B cell (primary cell): ENCODE measurements at regions of chr6 and their contacts with region 1.

Region 1: DNA sequence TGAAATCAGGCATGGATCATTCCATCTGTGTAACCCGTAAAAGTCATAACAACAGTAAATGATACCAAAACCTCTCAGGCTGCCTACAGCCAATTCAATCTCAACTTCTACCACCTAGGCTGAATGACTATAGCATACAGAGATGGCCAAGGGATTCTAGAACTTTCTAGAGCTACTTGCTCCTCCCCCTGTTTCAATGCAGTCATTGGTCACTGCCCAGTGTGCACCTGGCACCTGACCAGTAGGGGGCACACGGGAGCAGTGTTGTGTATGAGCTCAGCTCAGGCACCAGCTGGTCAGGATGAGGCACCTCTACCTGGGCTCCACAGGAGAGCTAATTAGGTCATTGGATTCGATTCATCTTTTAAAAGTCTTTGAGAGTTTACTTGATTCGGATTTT is 86.2 kb downstream of the PLEKHG1 start:
- DNase-seq: peak; percentile 73
- ATAC-seq: peak; percentile 44
- H3K4me3 ChIP-seq: no peak overlapping the region
- H3K4me3 Mint-ChIP-seq: no peak overlapping the region
- H3K27ac ChIP-seq: peak overlapping the region; percentile 72 to 96
- H3K27ac Mint-ChIP-seq: peak overlapping the region; percentile 46
- H3K4me1 ChIP-seq: peaks cover 89 to 98% of the 10 kb centered on the region in 2 donors
- H3K4me1 Mint-ChIP-seq: peaks cover 93% of the 10 kb centered on the region
- H3K27me3 ChIP-seq: no peaks in the 10 kb centered on the region
- H3K27me3 Mint-ChIP-seq: no peaks in the 10 kb centered on the region
- CTCF ChIP-seq: peak; percentile 75

Region 2: DNA sequence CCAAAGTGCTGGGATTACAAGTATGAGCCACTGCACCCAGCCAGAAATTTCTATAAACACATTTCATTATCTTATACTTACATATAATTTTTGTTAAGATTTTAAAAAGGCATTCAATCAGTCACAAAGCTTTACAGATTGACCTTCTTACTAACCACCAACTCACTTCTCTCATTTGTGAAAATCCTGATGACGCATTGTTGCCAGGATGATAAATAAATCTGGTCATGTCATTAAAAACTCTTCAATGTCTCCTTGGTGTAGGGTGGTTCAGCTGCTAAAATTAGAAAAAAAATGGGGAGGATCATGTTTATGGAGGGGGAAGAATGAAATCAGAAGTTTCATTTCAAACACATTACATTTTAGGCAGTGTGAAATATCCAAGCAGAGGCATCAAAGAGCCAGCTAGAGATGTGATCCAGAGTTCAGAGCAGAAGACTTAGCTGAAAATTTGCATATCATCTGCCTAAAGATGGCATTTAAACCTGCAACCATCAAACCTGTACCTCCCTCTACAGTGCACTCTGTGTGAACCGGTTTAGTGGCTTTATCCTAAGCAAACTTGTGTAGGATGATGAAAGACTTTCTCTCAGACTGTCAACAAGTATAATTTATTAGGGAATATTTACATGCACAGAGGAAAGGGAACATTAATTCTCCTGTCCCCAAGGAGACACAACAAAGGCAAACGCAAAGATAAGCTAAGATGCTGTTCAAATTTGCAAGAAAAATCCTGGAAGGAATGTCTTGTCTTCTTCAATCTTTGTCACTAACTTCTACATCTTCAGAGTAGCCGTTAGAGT is 171.1 kb before region 1 on chr6:
- CTCF ChIA-PET with region 1: no interaction called
- POLR2A ChIA-PET with region 1: no interaction called
- intact Hi-C with region 1: no loop called
- DNase-seq: no peak
- ATAC-seq: no peak
- H3K4me3 ChIP-seq: no peak overlapping the region
- H3K4me3 Mint-ChIP-seq: no peak overlapping the region
- H3K27ac ChIP-seq: no peak overlapping the region
- H3K27ac Mint-ChIP-seq: no peak overlapping the region
- H3K4me1 ChIP-seq: no peaks in the 10 kb centered on the region
- H3K4me1 Mint-ChIP-seq: no peaks in the 10 kb centered on the region
- H3K27me3 ChIP-seq: peaks cover 0 to 4% (median 2%) of the 10 kb centered on the region in 4 experiments
- H3K27me3 Mint-ChIP-seq: peaks cover 4% of the 10 kb centered on the region
- CTCF ChIP-seq: no peak

Region 3: GRCh38 chr6:150641398-150642139 is 44.3 kb before region 1 on chr6:
- CTCF ChIA-PET with region 1: interaction called, 5 read pairs
- POLR2A ChIA-PET with region 1: interaction called, 4 read pairs
- intact Hi-C with region 1: loop called (anchors 2 kb)
- DNase-seq: peak; percentile 86
- ATAC-seq: peak; percentile 68
- H3K4me3 ChIP-seq: peak overlapping the region; percentile 11 to 58 (median 41)
- H3K4me3 Mint-ChIP-seq: peak overlapping the region; percentile 90
- H3K27ac ChIP-seq: peak overlapping the region; percentile 72 to 90
- H3K27ac Mint-ChIP-seq: peak overlapping the region; percentile 90
- H3K4me1 ChIP-seq: peaks cover 54 to 80% of the 10 kb centered on the region in 2 donors
- H3K4me1 Mint-ChIP-seq: peaks cover 86% of the 10 kb centered on the region
- H3K27me3 ChIP-seq: no peaks in the 10 kb centered on the region
- H3K27me3 Mint-ChIP-seq: no peaks in the 10 kb centered on the region
- CTCF ChIP-seq: no peak

Region 4: GRCh38 chr6:150697515-150697914 is 11.7 kb after region 1 on chr6:
- CTCF ChIA-PET with region 1: interaction called, 18 read pairs
- POLR2A ChIA-PET with region 1: no interaction called
- intact Hi-C with region 1: loop called (anchors 2 kb)
- DNase-seq: no peak
- ATAC-seq: no peak
- H3K4me3 ChIP-seq: peak overlapping the region in 2 of 5 experiments; percentile 16 to 22
- H3K4me3 Mint-ChIP-seq: peak overlapping the region; percentile 41
- H3K27ac ChIP-seq: peak overlapping the region; percentile 63 to 96
- H3K27ac Mint-ChIP-seq: peak overlapping the region; percentile 50
- H3K4me1 ChIP-seq: peaks cover 91 to 95% of the 10 kb centered on the region in 2 donors
- H3K4me1 Mint-ChIP-seq: peaks cover 85% of the 10 kb centered on the region
- H3K27me3 ChIP-seq: no peaks in the 10 kb centered on the region
- H3K27me3 Mint-ChIP-seq: no peaks in the 10 kb centered on the region
- CTCF ChIP-seq: no peak

Region 5: DNA sequence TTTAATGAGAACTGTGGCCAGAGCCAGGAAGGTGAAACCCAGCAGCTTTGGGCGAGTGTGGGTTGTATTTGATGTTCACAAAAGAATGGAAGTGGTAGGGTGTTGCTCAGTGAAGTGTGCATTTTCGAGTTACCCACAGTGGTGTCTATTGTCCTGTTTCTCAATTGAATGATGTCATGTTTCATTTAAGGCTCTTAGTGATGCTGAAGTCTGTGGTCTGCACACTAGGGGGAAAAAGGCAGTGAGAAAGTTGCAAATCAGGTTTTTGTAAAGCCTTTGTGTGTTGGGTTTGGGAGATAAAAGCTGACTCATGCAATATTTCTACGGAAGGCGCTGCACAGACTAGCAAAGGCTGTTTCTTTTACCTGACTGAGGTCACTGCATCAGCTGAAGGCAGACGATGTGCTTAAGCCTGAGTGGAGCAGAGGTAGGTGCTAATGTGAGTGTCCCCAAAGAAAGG is 34.9 kb after region 1 on chr6:
- CTCF ChIA-PET with region 1: interaction called, 6 read pairs
- POLR2A ChIA-PET with region 1: interaction called, 3 read pairs
- intact Hi-C with region 1: loop called (anchors 2 kb)
- DNase-seq: peak; percentile 77
- ATAC-seq: peak; percentile 93
- H3K4me3 ChIP-seq: no peak overlapping the region
- H3K4me3 Mint-ChIP-seq: peak overlapping the region; percentile 40
- H3K27ac ChIP-seq: peak overlapping the region in 1 of 2 donors; percentile 56
- H3K27ac Mint-ChIP-seq: peak overlapping the region; percentile 54
- H3K4me1 ChIP-seq: peaks cover 43 to 53% of the 10 kb centered on the region in 2 donors
- H3K4me1 Mint-ChIP-seq: peaks cover 75% of the 10 kb centered on the region
- H3K27me3 ChIP-seq: no peaks in the 10 kb centered on the region
- H3K27me3 Mint-ChIP-seq: no peaks in the 10 kb centered on the region
- CTCF ChIP-seq: peak; percentile 52

Region 6: DNA sequence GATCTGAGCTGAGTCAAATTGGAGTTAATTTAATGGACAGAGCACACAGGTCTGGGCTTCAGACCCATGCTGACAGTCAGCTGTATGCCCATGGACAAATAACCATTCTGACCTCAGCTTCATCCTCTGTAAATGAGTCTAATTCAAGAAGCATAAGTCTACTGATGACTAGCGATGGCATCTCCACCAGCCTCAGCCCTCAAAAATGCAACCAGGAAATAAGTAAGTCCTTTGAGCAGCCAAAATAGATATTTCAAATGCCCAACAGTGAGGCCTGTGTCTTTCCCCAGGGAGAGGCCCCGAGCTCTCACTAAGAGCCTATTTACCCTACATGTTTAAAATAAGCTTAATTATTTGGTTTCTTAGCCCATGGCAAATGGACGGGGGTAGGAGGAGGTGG is 65.4 kb after region 1 on chr6:
- CTCF ChIA-PET with region 1: no interaction called
- POLR2A ChIA-PET with region 1: no interaction called
- intact Hi-C with region 1: no loop called
- DNase-seq: no peak
- ATAC-seq: no peak
- H3K4me3 ChIP-seq: no peak overlapping the region
- H3K4me3 Mint-ChIP-seq: no peak overlapping the region
- H3K27ac ChIP-seq: no peak overlapping the region
- H3K27ac Mint-ChIP-seq: no peak overlapping the region
- H3K4me1 ChIP-seq: no peaks in the 10 kb centered on the region
- H3K4me1 Mint-ChIP-seq: peaks cover 20% of the 10 kb centered on the region
- H3K27me3 ChIP-seq: no peaks in the 10 kb centered on the region
- H3K27me3 Mint-ChIP-seq: no peaks in the 10 kb centered on the region
- CTCF ChIP-seq: no peak

Region 7: GRCh38 chr6:150767571-150768018 is 81.7 kb after region 1 on chr6:
- CTCF ChIA-PET with region 1: no interaction called
- POLR2A ChIA-PET with region 1: no interaction called
- intact Hi-C with region 1: no loop called
- DNase-seq: peak; percentile 20
- ATAC-seq: no peak
- H3K4me3 ChIP-seq: no peak overlapping the region
- H3K4me3 Mint-ChIP-seq: no peak overlapping the region
- H3K27ac ChIP-seq: peak overlapping the region in 1 of 2 donors; percentile 55
- H3K27ac Mint-ChIP-seq: no peak overlapping the region
- H3K4me1 ChIP-seq: peaks cover 44 to 48% of the 10 kb centered on the region in 2 donors
- H3K4me1 Mint-ChIP-seq: peaks cover 51% of the 10 kb centered on the region
- H3K27me3 ChIP-seq: no peaks in the 10 kb centered on the region
- H3K27me3 Mint-ChIP-seq: no peaks in the 10 kb centered on the region
- CTCF ChIP-seq: no peak